H1 (cell line): ENCODE measurements at regions of chr1 and their contacts with region 1.

Region 1: DNA sequence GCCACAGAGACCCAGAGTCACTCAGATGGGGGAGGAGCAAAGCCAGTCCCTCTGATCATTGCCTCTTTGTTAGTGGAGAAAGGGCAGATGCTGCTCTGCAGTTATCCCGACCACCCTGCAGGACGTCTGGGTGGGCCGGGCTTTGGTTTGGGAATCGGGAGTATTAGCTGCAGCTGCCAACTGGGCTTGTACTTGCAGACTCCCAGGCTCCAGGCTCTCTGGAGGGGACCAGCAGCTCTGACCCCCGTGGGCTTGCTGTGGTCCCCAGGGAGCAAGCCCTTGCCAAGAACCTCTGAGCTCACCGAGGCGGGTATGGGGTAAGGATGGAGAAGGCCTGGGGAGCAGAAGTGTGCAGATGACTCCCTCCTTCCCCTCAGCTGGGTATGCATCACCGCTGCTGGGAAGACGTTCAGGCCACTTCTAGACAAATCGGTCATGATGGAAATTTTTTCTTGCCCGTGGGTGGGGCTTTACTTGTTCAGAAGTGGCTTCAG is 21.6 kb downstream of the MAPKAPK2 start:
- DNase-seq: no peak
- H3K4me3 ChIP-seq: no peak overlapping the region
- H3K27ac ChIP-seq: no peak overlapping the region
- H3K4me1 ChIP-seq: peaks cover 22 to 49% (median 32%) of the 10 kb centered on the region in 4 experiments
- H3K27me3 ChIP-seq: no peaks in the 10 kb centered on the region
- CTCF ChIP-seq: no peak
- EP300 ChIP-seq: no peak
- POLR2A ChIP-seq: no peak
- RAD21 ChIP-seq: no peak

Region 2: DNA sequence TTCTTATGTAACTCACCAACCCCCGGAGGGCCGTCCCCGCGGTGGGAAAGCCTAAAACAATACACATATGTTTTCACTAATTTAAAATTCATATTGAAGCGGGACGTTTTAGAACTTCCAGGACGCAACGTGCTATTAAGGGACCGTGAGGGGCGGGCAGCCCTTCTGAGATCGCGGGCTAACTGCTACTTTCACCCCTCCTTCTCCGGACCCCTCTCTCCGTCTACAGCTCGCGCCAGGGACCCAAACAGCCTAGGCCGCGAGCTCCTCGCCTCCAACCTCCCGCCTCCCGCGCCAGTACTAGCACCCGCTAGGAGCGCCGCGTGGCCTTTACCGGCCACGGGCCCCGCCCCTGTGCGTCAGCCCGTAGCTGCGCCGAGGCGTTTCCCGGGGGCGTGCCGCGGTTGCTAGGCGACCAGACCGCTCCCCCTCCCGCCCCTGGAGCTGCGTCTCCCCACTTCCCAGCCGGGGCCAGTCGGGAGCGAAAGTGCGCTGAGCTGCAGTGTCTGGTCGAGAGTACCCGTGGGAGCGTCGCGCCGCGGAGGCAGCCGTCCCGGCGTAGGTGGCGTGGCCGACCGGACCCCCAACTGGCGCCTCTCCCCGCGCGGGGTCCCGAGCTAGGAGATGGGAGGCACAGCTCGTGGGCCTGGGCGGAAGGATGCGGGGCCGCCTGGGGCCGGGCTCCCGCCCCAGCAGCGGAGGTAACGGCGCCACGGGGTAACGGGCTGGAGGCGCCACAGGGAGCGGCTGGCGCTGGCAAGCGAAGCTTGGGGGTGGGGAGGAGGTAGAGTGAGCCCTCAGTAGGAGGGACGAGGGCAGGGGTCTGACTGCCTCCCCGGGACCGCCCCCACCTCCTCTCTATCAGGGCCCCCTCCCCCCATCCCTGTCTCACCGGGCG is 71.0 kb before region 1 on chr1 and contains the start of gene DYRK3:
- CTCF ChIA-PET with region 1: interaction called, 16 read pairs
- POLR2A ChIA-PET with region 1: no interaction called
- DNase-seq: peak; percentile 63 to 97
- H3K4me3 ChIP-seq: peak within 1 kb of the TSS; percentile 66 to 88 (median 79)
- H3K27ac ChIP-seq: no peak within 1 kb of the TSS
- H3K4me1 ChIP-seq: peaks cover 0 to 10% (median 4%) of the 10 kb centered on the region in 4 experiments; a peak in 4 of 7 replicates
- H3K27me3 ChIP-seq: peaks cover 0 to 4% (median 0%) of the 10 kb centered on the region in 4 experiments; a peak in 2 of 7 replicates
- CTCF ChIP-seq: no peak
- EP300 ChIP-seq: no peak
- POLR2A ChIP-seq: peak in 1 of 2 experiments; percentile 68; a peak in 1 of 3 replicates
- RAD21 ChIP-seq: no peak
- total RNA-seq, gene DYRK3: 7.7 and 8.5 TPM in 2 replicates

Region 3: DNA sequence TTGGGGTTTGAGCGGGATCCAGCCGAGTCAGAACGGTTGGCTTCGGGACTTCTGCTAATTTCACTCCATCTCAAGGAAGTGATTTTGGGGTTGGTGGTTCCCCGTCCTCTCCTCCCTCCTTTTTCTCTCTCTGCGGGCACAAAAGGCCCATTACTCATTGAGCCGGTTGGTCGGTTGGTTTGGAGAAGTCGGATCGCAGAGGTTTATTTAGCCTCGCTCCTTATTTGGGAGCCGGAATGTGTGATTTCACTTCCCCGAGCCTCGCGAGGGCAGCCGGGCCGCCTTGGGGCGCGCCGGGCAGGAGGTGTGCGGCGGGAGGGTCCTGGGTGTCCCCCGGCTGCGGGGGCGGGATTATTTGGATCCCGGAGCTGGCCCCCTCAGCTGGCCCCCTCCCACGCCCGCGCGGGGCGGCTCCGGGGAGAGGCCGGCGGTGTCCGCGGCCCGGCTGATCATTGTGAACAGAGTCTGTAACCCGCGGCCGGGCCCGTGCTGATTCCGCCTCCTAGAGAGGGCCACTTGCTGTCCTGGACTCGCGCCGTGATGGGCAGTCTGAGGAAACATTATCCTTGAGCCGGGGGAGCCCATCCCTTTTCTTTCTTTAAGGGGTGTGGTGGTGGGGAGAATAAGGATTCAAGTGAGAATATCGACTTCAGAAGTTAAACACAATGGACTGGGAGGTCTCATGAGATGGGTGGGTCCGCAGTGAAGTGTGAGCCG is 20.4 kb before region 1 on chr1:
- CTCF ChIA-PET with region 1: interaction called, 27 read pairs
- POLR2A ChIA-PET with region 1: interaction called, 8 read pairs
- DNase-seq: no peak
- H3K4me3 ChIP-seq: peak overlapping the region; percentile 80 to 88 (median 82)
- H3K27ac ChIP-seq: peak overlapping the region; percentile 52; the same call in 1 of the 2 replicates
- H3K4me1 ChIP-seq: peaks cover 10 to 27% (median 15%) of the 10 kb centered on the region in 4 experiments
- H3K27me3 ChIP-seq: peaks cover 9 to 31% (median 26%) of the 10 kb centered on the region in 4 experiments
- CTCF ChIP-seq: no peak
- EP300 ChIP-seq: no peak
- POLR2A ChIP-seq: peak in 1 of 2 experiments; percentile 14; a peak in 1 of 3 replicates
- RAD21 ChIP-seq: no peak

Region 4: DNA sequence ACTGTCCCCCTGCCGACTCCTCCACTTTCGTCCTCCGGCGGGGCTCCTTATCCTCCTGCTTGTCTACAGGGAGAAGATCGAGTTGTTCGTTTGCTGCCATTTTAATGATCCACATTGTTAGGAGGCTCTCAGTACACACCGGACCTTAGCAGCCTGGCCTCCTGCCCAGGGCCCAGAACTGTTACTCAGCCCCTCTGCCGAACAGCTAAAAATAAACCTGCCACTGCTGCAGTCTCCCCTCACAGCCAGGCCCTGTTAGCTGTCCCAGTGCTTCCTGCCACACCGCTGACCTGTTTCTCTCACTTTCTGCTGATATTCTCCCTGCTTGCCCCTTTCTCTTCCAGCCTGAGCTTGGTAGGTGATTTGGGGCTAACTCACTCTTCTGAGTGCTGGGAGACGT is 13.3 kb before region 1 on chr1:
- CTCF ChIA-PET with region 1: interaction called, 27 read pairs
- POLR2A ChIA-PET with region 1: interaction called, 8 read pairs
- DNase-seq: no peak
- H3K4me3 ChIP-seq: no peak overlapping the region
- H3K27ac ChIP-seq: no peak overlapping the region
- H3K4me1 ChIP-seq: peaks cover 8 to 27% (median 23%) of the 10 kb centered on the region in 4 experiments
- H3K27me3 ChIP-seq: no peaks in the 10 kb centered on the region; a peak in 2 of 7 replicates
- CTCF ChIP-seq: no peak
- EP300 ChIP-seq: no peak
- POLR2A ChIP-seq: no peak
- RAD21 ChIP-seq: no peak

Region 5: GRCh38 chr1:206839857-206840256 is 133.5 kb after region 1 on chr1:
- CTCF ChIA-PET with region 1: no interaction called
- POLR2A ChIA-PET with region 1: no interaction called
- DNase-seq: no peak
- H3K4me3 ChIP-seq: no peak overlapping the region
- H3K27ac ChIP-seq: no peak overlapping the region
- H3K4me1 ChIP-seq: no peaks in the 10 kb centered on the region
- H3K27me3 ChIP-seq: no peaks in the 10 kb centered on the region
- CTCF ChIP-seq: no peak
- EP300 ChIP-seq: no peak
- POLR2A ChIP-seq: no peak
- RAD21 ChIP-seq: no peak